ENCODE measurements at regions of chr12 and their contacts with region 1.

Region 1: DNA sequence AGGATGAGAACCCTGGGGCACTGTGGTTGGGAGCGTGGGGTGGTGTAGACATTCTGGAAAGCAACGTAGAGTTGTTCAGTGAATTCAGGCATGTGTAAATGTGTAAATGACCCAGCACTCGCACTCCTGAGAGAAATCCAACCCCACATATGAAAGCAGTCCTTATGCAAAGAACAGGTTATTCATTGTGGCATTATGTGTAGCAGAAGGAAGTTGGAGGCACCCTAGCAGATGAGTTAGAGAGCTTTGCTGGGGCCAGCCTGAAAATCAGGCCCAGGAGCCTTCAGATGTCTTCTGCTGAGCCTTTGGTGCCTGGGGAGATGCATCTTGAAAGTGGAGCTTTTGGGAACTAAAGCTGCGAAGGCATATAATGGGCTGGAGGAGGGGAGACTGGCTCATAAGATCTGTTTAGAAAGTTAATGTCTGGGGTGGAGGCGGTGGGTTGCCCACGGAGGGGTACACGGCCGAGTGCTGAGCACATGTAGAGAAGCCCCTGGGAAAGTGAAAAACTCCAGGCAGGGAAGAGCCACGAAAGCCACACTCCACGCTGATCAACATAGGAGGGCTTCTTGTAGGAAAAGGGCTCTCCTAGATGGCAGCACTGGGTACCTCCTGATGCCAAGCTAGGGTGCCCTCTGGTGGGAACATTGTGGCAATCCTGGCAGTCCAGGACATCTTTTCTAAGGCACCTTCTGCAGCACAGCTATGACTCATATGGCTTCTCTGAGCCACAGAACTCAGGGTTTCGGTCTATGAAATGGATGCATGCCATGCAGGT is 6.0 kb upstream of the KRT83 start:
- DNase-seq: peak; percentile 76
- CTCF ChIP-seq: peak; percentile 80

Region 2: DNA sequence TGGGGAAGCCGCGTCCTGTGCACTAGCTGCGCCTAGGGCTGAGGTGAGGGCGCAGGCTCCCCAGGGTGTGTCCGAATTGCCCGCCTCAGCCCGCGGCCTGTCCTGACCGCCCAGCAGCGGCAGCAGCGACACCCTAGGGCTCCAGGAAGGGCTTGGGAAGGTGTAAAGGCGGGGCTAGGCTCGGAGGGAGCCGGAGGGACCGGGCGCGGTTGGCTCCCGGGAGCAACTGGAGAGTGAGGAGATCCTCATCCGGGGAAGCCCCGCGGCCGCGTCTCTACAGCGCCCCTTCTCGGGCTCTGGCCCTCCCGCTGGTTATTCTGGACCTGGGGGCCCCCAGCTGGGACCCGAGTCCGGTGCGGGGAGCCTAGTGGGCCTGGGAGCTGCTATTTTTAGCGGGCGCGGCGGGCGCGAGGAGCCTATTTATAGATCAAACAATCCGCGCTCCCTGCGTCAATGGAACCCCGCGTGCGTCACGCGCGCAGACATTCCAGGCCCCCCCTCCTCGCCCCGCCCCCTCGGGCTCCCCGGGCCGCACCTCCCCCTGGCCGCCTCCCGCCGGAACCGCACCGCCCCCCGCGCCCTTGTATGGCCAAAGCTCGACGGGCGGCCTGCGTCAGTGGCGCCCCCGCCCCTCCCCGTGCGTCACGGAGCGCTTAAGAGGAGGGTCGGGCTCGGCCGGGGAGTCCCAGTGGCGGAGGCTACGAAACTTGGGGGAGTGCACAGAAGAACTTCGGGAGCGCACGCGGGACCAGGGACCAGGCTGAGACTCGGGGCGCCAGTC is 276.3 kb before region 1 on chr12 and contains the start of gene NR4A1:
- CTCF ChIA-PET with region 1: no interaction called
- POLR2A ChIA-PET with region 1: no interaction called
- DNase-seq: peak; percentile 98
- CTCF ChIP-seq: peak; percentile 34

Region 3: DNA sequence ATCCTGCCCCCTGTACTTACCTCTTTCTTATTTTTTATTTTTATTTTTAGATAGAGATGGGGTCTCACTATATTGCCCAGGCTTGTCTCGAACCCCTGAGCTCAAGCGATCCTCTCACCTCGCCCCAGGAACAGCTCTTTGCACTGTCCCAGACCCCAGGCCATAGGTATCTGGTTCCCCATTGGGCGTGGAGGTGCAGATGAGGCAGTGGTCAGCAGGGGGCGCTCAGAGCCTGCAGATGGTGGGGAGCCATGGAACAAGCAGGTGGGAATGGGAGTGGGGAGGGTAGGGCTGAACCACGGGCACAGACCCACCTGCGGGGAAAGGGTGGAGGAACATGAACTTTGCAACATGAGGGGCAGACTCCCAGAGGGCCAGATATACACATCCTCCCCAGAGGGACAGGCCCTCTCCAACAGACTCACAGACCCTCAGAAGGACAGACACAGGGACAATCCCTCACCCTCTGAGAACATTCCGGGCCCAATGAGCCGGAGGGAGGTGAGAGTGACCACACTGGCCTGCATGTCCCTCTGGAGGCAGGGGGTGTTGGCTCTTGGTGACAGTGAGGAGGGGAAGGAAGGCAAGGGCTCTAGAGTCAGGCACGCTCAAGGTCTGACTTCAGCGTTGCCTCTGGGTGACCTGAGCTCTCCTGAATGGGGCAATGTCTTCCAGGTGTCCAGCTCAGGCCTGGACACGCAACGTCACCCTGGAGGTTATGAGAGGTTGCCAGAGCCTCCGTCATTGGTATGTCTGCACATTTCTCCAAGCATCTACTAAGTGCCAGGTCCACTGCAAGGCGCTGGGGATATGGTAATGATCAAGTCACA is 170.3 kb before region 1 on chr12:
- CTCF ChIA-PET with region 1: interaction called, 48 read pairs
- POLR2A ChIA-PET with region 1: no interaction called
- DNase-seq: peak; percentile 78
- CTCF ChIP-seq: peak; percentile 98

Region 4: DNA sequence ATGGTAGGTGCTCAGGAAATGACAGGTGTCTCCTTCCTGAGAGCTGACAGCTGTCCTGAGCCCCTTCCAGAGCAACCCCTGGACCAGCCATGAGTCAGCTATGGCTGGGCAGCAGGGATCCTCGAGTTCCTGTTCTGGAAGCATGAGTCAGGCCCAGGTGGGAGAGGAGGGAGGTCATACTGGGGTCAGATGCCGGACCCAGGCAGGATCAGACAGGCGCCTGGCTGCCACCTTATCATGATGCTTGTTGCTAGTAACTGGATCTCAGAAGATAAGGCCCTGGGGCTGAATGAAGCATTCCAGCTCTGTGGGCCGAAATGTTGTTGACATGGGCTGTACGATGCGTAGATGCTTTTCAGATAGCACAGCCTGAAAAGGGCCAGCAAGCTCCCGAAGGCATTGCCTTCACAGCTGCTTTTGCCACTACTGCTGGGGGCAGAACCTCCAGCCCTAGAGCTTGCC is 111.6 kb before region 1 on chr12:
- CTCF ChIA-PET with region 1: no interaction called
- POLR2A ChIA-PET with region 1: no interaction called
- DNase-seq: no peak
- CTCF ChIP-seq: no peak

Region 5: GRCh38 chr12:52285172-52285745 is 42.0 kb before region 1 on chr12:
- CTCF ChIA-PET with region 1: interaction called, 17 read pairs
- POLR2A ChIA-PET with region 1: no interaction called
- DNase-seq: no peak
- CTCF ChIP-seq: no peak

Region 6: GRCh38 chr12:52307836-52308805 is 19.1 kb before region 1 on chr12:
- CTCF ChIA-PET with region 1: interaction called, 28 read pairs
- POLR2A ChIA-PET with region 1: no interaction called
- DNase-seq: no peak
- CTCF ChIP-seq: no peak

Region 7: DNA sequence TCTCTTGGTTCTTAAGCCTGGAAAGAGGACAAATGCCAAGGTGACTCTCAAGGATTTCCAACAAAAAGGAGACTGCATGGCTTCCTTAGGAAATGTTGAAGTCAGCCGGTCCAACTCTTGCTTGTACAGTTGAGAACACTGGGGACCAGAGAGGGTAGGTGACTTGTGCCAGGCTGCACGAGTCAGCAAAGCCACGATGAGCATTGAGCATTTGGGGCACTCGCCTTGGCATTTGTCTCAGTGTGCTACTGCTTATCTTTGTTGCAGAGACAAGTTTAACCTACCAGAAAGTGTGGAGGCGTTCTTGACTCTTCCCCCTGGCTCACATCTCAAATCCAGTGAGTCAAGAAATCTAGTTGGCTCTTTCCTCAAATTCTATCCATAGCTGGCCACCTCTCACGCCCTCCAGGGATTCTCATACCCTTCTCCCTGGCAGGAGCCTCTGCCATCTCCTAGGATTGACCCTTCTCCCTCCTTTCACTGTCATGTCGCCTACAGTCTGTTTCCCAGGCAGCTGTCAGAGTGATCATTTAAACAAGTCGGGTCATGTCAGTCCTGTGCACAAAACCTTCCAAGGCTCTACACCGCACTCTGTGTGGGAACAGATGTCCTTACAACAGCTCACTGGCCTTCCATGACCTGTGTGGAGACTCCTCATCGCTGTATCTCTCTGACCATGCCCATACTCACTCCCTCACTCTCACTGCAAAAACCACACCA is 11.2 kb after region 1 on chr12:
- CTCF ChIA-PET with region 1: interaction called, 18 read pairs
- POLR2A ChIA-PET with region 1: no interaction called
- DNase-seq: no peak
- CTCF ChIP-seq: no peak